CD4-positive, alpha-beta T cell (primary cell): ENCODE measurements at regions of chr10 and their contacts with region 1.

Region 1: GRCh38 chr10:6088721-6089390 is at the start of gene RBM17:
- DNase-seq: peak; percentile 94 to 99 (median 98)
- ATAC-seq: peak; percentile 86
- H3K4me3 ChIP-seq: peak within 1 kb of the TSS; percentile 92
- H3K4me3 Mint-ChIP-seq: peak within 1 kb of the TSS; percentile 85
- H3K27ac ChIP-seq: peak within 1 kb of the TSS; percentile 26 to 33
- H3K27ac Mint-ChIP-seq: peak within 1 kb of the TSS; percentile 77
- H3K4me1 ChIP-seq: peaks cover 50% of the 10 kb centered on the region
- H3K4me1 Mint-ChIP-seq: peaks cover 73% of the 10 kb centered on the region
- H3K27me3 ChIP-seq: no peaks in the 10 kb centered on the region
- H3K27me3 Mint-ChIP-seq: no peaks in the 10 kb centered on the region
- CTCF ChIP-seq: peak; percentile 100
- total RNA-seq, gene RBM17: 143 to 150 TPM

Region 2: DNA sequence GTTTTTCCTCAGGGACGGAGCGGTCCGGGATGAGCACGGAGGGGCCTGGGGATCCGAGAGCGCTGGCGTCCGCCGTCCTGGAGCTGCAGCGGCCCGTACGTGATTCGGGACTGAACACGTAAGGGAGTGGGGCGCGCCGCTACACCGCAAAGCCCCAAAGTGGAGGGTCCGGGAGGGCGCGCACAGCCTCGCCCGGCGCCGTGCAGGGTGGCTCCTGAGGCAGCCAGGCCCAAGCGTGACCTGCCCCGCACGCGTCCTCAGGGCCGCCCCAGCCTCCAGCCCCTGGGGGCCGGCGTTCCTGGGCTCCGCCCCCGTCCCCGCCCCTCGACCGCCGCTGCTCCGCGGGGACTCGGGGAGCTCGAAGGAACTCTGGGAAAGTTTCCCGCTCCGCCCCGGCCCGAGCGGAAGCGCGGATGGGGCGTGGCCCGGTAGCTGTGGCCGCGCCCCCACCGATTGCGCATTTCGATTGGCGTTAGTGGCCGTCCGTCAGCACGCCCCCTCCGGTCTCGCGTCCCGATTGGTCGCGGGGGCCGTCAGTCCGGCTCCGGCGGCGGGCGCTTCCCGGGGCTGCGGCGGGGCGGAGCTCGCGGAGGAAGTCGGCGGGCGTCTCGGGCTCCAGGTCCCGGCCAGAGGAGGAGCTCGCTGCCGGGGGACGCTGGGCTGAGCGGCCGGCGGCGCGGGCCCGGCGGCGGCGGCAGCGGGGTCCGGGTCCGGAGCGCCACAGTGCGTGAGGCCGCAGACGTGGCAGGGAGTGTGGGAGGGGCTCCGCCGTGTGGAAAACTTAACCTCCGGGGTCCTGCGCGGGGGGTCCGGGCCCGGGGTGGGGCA is 199.0 kb before region 1 on chr10 and contains the starts of genes ANKRD16 and FBH1:
- CTCF ChIA-PET with region 1: interaction called, 5 read pairs
- POLR2A ChIA-PET with region 1: no interaction called
- intact Hi-C with region 1: loop called in 1 of 2 experiments (anchors 5 kb)
- DNase-seq: peak; percentile 94 to 99 (median 96)
- ATAC-seq: peak; percentile 87
- H3K4me3 ChIP-seq: peak within 1 kb of the TSS; percentile 79
- H3K4me3 Mint-ChIP-seq: peak within 1 kb of the TSS; percentile 95
- H3K27ac ChIP-seq: peak within 1 kb of the TSS in 1 of 2 donors; percentile 51
- H3K27ac Mint-ChIP-seq: peak within 1 kb of the TSS; percentile 80
- H3K4me1 ChIP-seq: peaks cover 32% of the 10 kb centered on the region
- H3K4me1 Mint-ChIP-seq: peaks cover 60% of the 10 kb centered on the region
- H3K27me3 ChIP-seq: no peaks in the 10 kb centered on the region
- H3K27me3 Mint-ChIP-seq: no peaks in the 10 kb centered on the region
- CTCF ChIP-seq: no peak
- total RNA-seq, gene ANKRD16: 1.4 to 1.8 TPM
- total RNA-seq, gene FBH1: 33.9 to 34.2 TPM

Region 3: DNA sequence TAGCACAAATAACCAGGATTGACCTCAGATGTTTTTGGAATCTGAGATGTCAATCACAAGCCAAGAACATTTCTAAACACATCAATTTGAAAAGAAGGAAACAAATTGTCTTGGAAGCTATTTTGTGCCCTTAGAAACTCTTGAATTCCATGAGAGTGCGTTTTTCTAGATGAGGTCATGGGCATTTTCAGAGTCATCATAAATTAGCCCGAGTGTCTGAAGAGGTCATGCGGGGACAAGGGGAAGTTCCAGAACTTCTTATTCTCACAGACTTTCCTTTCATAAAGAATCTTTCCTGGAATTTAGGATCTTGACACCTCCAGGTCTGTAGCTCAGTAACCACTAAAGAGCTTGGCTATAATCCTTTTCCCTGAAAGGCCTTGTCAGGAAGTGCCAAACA is 54.9 kb before region 1 on chr10:
- CTCF ChIA-PET with region 1: interaction called, 9 read pairs
- POLR2A ChIA-PET with region 1: interaction called, 13 read pairs
- intact Hi-C with region 1: no loop called
- DNase-seq: peak in 1 of 14 experiments; percentile 32
- ATAC-seq: no peak
- H3K4me3 ChIP-seq: no peak overlapping the region
- H3K4me3 Mint-ChIP-seq: no peak overlapping the region
- H3K27ac ChIP-seq: no peak overlapping the region
- H3K27ac Mint-ChIP-seq: peak overlapping the region; percentile 19
- H3K4me1 ChIP-seq: peaks cover 33% of the 10 kb centered on the region
- H3K4me1 Mint-ChIP-seq: peaks cover 39% of the 10 kb centered on the region
- H3K27me3 ChIP-seq: no peaks in the 10 kb centered on the region
- H3K27me3 Mint-ChIP-seq: no peaks in the 10 kb centered on the region
- CTCF ChIP-seq: no peak

Region 4: DNA sequence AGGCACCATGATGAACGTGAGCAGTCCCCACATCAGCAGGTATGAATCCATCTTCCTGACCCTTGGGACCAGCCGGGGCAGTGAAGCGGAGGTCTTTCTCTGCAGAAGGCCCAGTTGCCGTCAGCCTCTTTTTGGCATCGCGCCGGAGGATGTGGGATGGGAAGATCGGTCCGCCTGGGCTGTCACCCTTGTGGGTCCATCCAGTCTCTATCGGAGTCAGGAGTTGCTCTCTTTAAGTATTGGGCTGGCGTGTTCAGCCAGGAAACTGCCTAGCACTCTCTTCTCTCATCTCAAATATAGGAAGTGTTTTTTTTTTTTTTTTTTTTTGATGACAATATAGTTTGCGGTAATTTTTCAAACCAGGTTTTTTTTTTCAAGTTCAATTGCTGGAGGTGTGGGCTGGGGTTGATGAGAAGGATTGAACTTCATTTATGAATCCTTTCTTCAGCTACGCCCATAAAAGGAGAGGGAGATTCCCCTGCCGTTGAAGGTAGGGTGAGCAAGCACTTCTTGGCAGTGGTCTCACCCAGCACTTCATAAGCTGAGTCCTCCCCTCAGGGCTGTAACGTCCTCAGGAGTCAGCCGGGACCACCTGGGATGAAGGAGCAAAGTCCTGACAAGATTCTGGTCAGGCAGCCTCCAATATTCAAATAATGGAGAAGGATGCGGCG is 26.6 kb before region 1 on chr10 and contains the start of gene IL2RA:
- CTCF ChIA-PET with region 1: interaction called, 22 read pairs
- POLR2A ChIA-PET with region 1: interaction called, 51 read pairs
- intact Hi-C with region 1: no loop called
- DNase-seq: peak in 12 of 14 experiments; percentile 28 to 90 (median 51)
- ATAC-seq: peak; percentile 87
- H3K4me3 ChIP-seq: peak within 1 kb of the TSS; percentile 63
- H3K4me3 Mint-ChIP-seq: peak within 1 kb of the TSS; percentile 94
- H3K27ac ChIP-seq: peak within 1 kb of the TSS; percentile 23 to 71
- H3K27ac Mint-ChIP-seq: peak within 1 kb of the TSS; percentile 76
- H3K4me1 ChIP-seq: peaks cover 52% of the 10 kb centered on the region
- H3K4me1 Mint-ChIP-seq: peaks cover 69% of the 10 kb centered on the region
- H3K27me3 ChIP-seq: no peaks in the 10 kb centered on the region
- H3K27me3 Mint-ChIP-seq: no peaks in the 10 kb centered on the region
- CTCF ChIP-seq: no peak
- total RNA-seq, gene IL2RA: 4.9 to 5.4 TPM

Region 5: DNA sequence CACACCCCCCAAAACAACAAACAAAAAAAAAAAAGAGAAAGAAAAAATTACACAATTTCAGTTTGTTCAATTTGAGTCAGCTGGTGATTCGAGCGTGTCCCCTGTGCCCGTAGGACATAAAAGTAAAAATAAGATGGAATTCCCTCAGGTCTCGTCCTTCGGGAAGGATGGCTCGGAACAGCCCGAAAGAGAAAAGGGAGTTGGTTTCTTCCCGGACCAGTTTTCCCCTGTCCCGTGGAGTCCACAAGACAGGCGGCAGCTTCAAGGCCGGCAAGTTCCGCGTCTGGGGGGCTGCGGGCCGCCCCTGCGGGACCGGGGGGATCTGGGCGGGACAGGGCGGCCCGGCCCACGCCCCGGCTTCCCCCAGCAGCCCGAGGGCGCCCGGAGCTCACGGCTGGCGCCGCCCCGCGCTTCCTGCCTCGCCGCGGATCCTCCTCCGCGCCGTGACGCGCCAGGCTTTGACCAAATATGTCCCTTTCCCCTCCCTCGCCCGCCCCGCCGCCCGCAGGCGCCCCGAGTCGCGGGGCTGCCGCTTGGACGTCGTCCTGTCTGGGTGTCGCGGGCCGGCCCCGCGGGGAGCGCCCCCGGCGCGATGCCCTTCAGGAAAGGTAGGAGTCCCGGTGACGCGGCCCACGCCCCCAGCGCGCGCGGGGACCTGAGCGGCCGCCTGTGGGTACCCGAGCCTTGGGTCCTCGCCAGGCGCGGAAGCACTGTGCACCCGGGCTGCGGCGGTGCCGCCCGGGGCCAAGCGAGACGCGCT is 55.7 kb after region 1 on chr10:
- CTCF ChIA-PET with region 1: interaction called, 5 read pairs
- POLR2A ChIA-PET with region 1: no interaction called
- intact Hi-C with region 1: loop called in 1 of 2 experiments (anchors 2 kb)
- DNase-seq: peak; percentile 71 to 94 (median 85)
- ATAC-seq: peak; percentile 90
- H3K4me3 ChIP-seq: peak overlapping the region; percentile 75
- H3K4me3 Mint-ChIP-seq: peak overlapping the region; percentile 89
- H3K27ac ChIP-seq: peak overlapping the region; percentile 70 to 77
- H3K27ac Mint-ChIP-seq: peak overlapping the region; percentile 90
- H3K4me1 ChIP-seq: peaks cover 89% of the 10 kb centered on the region
- H3K4me1 Mint-ChIP-seq: peaks cover 66% of the 10 kb centered on the region
- H3K27me3 ChIP-seq: no peaks in the 10 kb centered on the region
- H3K27me3 Mint-ChIP-seq: no peaks in the 10 kb centered on the region
- CTCF ChIP-seq: no peak

Region 6: DNA sequence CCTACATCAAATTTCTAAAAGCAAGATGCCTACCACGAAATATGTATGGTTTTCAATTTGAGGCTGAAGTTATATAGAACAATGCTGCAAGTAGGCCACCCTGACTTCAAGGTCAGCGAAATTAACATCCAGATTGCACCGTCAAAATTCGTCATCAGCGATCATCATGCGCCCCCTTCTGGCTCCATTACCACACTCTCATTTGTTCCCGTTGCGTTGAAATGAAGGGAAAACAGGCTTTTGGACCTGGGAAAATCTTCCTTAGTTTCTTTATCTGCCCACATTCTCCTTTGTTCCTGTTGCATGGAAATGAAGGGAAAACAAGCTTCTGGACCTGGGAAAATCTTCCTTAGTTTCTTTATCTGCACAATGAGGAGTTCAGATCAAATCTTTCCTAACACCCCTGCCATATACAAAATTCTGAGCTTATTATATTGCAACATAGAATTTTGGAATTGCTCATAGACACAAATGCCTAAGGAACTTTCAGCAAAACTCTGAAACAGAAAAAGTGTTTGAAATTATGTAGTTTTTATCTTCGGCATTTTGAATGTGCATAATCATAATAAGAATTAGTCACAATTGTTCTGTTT is 589.5 kb after region 1 on chr10:
- CTCF ChIA-PET with region 1: no interaction called
- POLR2A ChIA-PET with region 1: no interaction called
- intact Hi-C with region 1: no loop called
- DNase-seq: peak; percentile 36 to 83 (median 52)
- ATAC-seq: peak; percentile 51
- H3K4me3 ChIP-seq: no peak overlapping the region
- H3K4me3 Mint-ChIP-seq: no peak overlapping the region
- H3K27ac ChIP-seq: no peak overlapping the region
- H3K27ac Mint-ChIP-seq: no peak overlapping the region
- H3K4me1 ChIP-seq: no peaks in the 10 kb centered on the region
- H3K4me1 Mint-ChIP-seq: peaks cover 5% of the 10 kb centered on the region
- H3K27me3 ChIP-seq: peaks cover 0 to 3% of the 10 kb centered on the region in 2 experiments
- H3K27me3 Mint-ChIP-seq: no peaks in the 10 kb centered on the region
- CTCF ChIP-seq: peak; percentile 89